Activated CD8-positive, alpha-beta memory T cell treated with anti-CD3 and anti-CD28 coated beads, Interleukin-2, amount 10 ng/mL, durations not matched to agents 7 days and 5 days (primary cell): ENCODE measurements at regions of chr7 and their contacts with region 1.

Region 1: GRCh38 chr7:148940702-148941597 is 56.9 kb upstream of the EZH2 start:
- DNase-seq: peak; percentile 79
- ATAC-seq: peak; percentile 85
- H3K4me3 Mint-ChIP-seq: peak overlapping the region; percentile 79
- H3K27ac Mint-ChIP-seq: peak overlapping the region; percentile 97
- H3K4me1 Mint-ChIP-seq: peaks cover 20% of the 10 kb centered on the region
- H3K27me3 Mint-ChIP-seq: no peaks in the 10 kb centered on the region

Region 2: DNA sequence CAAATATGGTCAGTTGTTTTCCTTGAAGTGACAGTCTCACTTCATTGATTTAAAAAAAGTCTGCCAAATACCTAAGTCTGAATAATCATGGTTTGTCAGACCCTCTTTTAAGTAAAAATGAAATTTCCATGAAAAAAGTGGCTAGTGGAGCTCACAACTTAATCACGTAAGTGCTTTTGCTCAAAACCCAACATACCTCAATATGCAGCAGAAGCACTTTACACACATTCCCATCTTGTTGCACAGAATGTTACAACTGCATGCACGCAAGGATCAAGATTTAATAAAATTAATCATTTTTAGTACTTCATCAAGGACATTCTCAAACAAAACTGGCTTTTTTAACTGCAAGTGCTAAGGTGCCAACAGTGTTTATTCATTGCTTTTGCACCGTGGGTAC is 78.5 kb before region 1 on chr7:
- CTCF ChIA-PET with region 1: no interaction called
- DNase-seq: no peak
- ATAC-seq: no peak
- H3K4me3 Mint-ChIP-seq: no peak overlapping the region
- H3K27ac Mint-ChIP-seq: no peak overlapping the region
- H3K4me1 Mint-ChIP-seq: peaks cover 37% of the 10 kb centered on the region
- H3K27me3 Mint-ChIP-seq: no peaks in the 10 kb centered on the region

Region 3: DNA sequence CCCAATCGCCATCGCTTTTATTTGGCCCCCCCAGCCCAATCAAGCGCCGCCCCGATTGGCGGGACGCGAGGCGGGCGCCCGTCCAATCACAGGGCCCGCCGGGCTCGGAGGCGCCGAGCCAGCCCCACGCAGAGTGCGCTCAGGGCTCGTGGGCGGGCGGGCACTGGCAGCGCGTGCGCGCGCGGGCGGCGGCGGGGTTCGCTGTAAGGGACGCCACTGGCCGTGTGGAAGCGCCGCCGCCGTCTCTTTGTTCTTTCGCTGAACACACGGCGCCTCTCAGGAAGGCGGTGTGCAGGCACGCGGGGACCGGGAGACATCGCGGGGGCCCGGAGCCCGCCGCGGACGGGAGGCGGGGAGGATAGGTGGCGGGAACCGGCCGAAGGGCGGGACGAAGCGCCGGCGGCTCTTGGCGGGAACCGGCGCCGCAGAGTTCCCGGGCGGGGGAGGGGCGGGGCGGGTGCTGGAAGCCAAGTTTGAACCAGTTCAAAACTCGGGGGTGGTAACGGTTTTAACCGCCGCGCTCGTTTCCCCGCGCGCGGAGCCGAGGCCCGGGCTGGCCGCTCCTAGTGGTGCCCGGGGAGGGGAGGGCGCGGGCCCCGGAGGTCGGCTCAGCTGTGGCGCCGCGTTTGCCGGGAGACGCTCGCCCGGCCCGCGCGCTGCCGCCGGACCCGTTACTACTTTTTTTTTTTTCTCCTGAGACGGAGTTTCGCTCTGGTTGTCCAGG is 56.5 kb before region 1 on chr7:
- CTCF ChIA-PET with region 1: interaction called, 19 read pairs
- DNase-seq: peak; percentile 95
- ATAC-seq: peak; percentile 94
- H3K4me3 Mint-ChIP-seq: peak overlapping the region; percentile 96
- H3K27ac Mint-ChIP-seq: peak overlapping the region; percentile 99
- H3K4me1 Mint-ChIP-seq: peaks cover 35% of the 10 kb centered on the region
- H3K27me3 Mint-ChIP-seq: no peaks in the 10 kb centered on the region

Region 4: DNA sequence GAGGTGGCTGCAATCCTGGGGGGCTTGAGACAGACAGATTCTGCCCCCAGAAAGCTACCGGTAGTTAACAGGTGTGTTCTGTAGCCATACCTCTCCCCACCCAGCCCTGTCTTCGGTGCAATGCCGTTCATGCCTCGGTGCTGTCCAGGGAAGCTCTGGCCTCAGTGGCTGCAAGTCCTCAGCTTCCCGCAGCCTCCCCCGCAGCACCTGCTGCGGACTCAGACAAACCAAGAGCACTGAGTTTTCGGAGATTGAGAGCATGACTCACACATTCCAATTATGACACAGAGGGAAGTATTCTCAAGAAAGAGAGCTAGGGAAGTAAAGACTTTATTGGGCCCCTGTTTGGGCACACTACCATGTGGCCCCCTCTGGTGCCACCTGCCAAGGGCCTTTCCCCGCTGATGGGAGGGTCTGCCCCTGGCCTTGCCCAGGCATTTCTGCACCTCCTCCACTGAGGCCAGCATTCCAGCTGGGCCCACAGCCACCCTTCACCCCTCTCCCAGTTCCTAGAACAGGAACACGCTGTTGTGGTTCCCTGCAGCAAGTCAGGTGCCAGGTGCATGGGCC is 26.7 kb before region 1 on chr7:
- CTCF ChIA-PET with region 1: interaction called, 19 read pairs
- DNase-seq: peak; percentile 65
- ATAC-seq: peak; percentile 64
- H3K4me3 Mint-ChIP-seq: peak overlapping the region; percentile 36
- H3K27ac Mint-ChIP-seq: peak overlapping the region; percentile 69
- H3K4me1 Mint-ChIP-seq: peaks cover 46% of the 10 kb centered on the region
- H3K27me3 Mint-ChIP-seq: peaks cover 3% of the 10 kb centered on the region

Region 5: DNA sequence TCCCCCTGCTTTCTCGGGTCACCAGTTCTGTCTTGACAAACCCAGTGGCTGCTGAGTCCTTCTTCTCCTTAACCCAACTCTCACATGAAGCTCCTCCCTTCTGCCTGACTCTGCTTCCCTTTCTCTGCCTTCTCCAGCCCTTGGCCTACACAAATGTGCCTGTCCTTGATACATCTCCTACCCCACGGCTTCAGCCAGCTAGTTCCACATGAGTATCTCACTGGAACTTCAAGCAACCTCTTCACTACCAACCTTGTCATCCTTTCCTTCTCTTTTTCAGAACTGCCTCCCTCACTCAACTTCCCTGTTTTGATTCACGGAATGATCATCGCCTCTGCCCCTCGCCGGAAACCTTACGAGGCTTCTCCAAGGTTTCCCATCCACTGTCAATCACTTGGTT is 31.4 kb after region 1 on chr7:
- CTCF ChIA-PET with region 1: no interaction called
- DNase-seq: no peak
- ATAC-seq: no peak
- H3K4me3 Mint-ChIP-seq: no peak overlapping the region
- H3K27ac Mint-ChIP-seq: no peak overlapping the region
- H3K4me1 Mint-ChIP-seq: no peaks in the 10 kb centered on the region
- H3K27me3 Mint-ChIP-seq: peaks cover 6% of the 10 kb centered on the region